PC-9 (cell line): ENCODE measurements at regions of chr15 and their contacts with region 1.

Region 1: GRCh38 chr15:65541231-65541820 is 11.1 kb downstream of the HACD3 start:
- DNase-seq: no peak
- H3K4me3 ChIP-seq: no peak overlapping the region
- H3K27ac ChIP-seq: no peak overlapping the region
- H3K4me1 ChIP-seq: no peaks in the 10 kb centered on the region
- H3K27me3 ChIP-seq: no peaks in the 10 kb centered on the region
- CTCF ChIP-seq: no peak

Region 2: GRCh38 chr15:65318870-65319356 is 222.4 kb before region 1 on chr15:
- CTCF ChIA-PET with region 1: no interaction called
- POLR2A ChIA-PET with region 1: no interaction called
- intact Hi-C with region 1: no loop called
- DNase-seq: peak; percentile 49 to 80
- H3K4me3 ChIP-seq: no peak overlapping the region
- H3K27ac ChIP-seq: no peak overlapping the region
- H3K4me1 ChIP-seq: no peaks in the 10 kb centered on the region
- H3K27me3 ChIP-seq: no peaks in the 10 kb centered on the region
- CTCF ChIP-seq: peak; percentile 88

Region 3: DNA sequence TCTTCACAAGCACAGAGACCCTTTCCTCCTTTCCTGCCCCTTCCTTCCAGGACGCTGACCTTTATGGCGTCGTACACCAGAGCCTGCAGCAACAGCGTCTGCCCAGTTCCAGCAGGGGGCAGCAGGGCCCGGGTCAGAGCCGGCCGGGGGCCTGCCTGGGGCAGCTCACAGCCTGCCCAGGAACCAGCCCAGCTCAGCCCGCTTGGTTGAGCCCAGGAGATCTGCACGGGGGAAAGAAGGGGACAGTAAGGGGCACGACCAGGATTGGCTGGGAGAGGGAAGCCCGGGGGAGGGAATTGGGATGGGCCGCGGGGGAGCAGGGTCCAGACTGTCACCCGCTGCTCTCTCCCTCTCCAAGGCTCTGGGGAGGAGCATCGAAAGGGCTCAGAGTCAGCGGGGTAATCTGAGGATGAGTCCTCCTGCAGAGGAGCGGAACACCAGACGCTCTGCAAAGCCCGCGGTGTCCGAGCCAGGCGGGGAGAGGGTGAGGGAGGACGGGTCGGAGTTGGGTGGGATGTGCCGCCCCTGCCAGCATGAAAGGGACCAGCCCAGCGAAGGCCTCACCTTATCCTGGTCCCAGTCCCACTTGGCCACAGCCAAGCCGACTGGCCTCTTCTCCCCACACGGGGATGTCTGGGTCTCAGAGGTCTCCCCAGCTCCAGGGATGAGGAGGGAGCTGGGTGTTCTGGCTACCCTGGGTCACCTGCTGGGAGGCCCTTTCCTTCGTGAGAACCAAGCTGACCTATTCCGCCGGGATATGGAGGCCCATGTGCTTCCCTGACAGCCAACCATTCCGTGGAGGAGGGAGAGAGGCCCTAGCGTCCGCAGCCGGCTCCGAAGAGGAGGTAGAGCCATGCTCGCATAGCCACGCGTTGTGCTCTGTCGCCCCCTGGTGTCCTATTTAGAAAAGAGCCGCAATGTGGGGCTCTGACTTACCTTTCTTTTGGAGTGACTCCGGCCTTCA is 156.1 kb before region 1 on chr15:
- CTCF ChIA-PET with region 1: no interaction called
- POLR2A ChIA-PET with region 1: no interaction called
- intact Hi-C with region 1: no loop called
- DNase-seq: peak; percentile 57 to 85
- H3K4me3 ChIP-seq: peak overlapping the region; percentile 46
- H3K27ac ChIP-seq: no peak overlapping the region
- H3K4me1 ChIP-seq: peaks cover 4% of the 10 kb centered on the region; the same call in 1 of the 2 replicates
- H3K27me3 ChIP-seq: peaks cover 18% of the 10 kb centered on the region
- CTCF ChIP-seq: peak; percentile 80

Region 4: GRCh38 chr15:65421360-65422070 is 119.8 kb before region 1 on chr15:
- CTCF ChIA-PET with region 1: no interaction called
- POLR2A ChIA-PET with region 1: no interaction called
- intact Hi-C with region 1: no loop called
- DNase-seq: no peak
- H3K4me3 ChIP-seq: no peak overlapping the region
- H3K27ac ChIP-seq: no peak overlapping the region
- H3K4me1 ChIP-seq: peaks cover 9% of the 10 kb centered on the region; the same call in 1 of the 2 replicates
- H3K27me3 ChIP-seq: peaks cover 4% of the 10 kb centered on the region; the same call in 1 of the 2 replicates
- CTCF ChIP-seq: no peak

Region 5: GRCh38 chr15:65845826-65846519 is 304.6 kb after region 1 on chr15:
- CTCF ChIA-PET with region 1: interaction called, 11 read pairs
- POLR2A ChIA-PET with region 1: no interaction called
- intact Hi-C with region 1: no loop called
- DNase-seq: no peak
- H3K4me3 ChIP-seq: no peak overlapping the region
- H3K27ac ChIP-seq: no peak overlapping the region
- H3K4me1 ChIP-seq: no peaks in the 10 kb centered on the region
- H3K27me3 ChIP-seq: no peaks in the 10 kb centered on the region
- CTCF ChIP-seq: no peak

Region 6: DNA sequence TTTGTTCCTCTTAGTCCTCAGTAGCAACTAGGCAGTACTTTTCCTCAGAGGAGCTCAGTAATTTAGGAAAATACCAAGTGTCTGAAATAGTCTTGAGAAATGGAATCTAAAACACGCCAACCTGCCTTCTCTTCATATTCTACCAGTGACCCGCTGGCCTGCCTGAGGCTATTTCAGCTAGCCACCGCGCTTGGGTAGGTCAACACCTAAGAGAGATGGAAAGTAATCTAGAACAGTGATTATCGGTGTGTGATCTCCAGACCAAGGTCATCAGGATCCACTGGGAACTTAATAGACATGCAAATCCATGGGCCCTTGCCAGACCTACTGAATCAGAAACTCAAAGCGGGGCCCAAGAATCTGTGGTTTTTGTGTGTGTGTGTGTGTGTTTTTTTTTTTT is 1017.0 kb after region 1 on chr15:
- CTCF ChIA-PET with region 1: no interaction called
- POLR2A ChIA-PET with region 1: no interaction called
- intact Hi-C with region 1: no loop called
- DNase-seq: no peak
- H3K4me3 ChIP-seq: no peak overlapping the region
- H3K27ac ChIP-seq: no peak overlapping the region
- H3K4me1 ChIP-seq: no peaks in the 10 kb centered on the region
- H3K27me3 ChIP-seq: no peaks in the 10 kb centered on the region
- CTCF ChIP-seq: no peak